HEK293T (cell line): ENCODE measurements at regions of chr6 and their contacts with region 1.

Region 1: GRCh38 chr6:36340618-36341454 is 4.1 kb upstream of the BNIP5 start:
- DNase-seq: peak; percentile 86

Region 2: DNA sequence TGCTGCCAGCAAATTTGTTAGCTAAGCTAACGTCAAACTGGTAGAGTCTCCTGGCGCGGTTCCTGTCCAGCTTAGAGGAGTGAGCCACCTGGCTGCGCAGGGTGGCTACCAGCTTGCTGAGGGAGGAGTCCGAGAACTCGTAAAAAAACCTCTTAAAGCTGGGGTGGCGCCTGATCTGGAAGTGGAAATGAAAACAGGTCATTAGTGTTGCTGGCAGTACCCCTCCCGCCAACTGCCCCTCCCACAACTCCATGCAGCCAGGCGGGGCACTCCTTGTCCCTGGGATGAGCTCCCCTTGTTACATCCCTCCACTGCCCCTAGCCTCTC is 21.4 kb before region 1 on chr6:
- CTCF ChIA-PET with region 1: interaction called, 17 read pairs
- POLR2A ChIA-PET with region 1: no interaction called
- DNase-seq: no peak

Region 3: DNA sequence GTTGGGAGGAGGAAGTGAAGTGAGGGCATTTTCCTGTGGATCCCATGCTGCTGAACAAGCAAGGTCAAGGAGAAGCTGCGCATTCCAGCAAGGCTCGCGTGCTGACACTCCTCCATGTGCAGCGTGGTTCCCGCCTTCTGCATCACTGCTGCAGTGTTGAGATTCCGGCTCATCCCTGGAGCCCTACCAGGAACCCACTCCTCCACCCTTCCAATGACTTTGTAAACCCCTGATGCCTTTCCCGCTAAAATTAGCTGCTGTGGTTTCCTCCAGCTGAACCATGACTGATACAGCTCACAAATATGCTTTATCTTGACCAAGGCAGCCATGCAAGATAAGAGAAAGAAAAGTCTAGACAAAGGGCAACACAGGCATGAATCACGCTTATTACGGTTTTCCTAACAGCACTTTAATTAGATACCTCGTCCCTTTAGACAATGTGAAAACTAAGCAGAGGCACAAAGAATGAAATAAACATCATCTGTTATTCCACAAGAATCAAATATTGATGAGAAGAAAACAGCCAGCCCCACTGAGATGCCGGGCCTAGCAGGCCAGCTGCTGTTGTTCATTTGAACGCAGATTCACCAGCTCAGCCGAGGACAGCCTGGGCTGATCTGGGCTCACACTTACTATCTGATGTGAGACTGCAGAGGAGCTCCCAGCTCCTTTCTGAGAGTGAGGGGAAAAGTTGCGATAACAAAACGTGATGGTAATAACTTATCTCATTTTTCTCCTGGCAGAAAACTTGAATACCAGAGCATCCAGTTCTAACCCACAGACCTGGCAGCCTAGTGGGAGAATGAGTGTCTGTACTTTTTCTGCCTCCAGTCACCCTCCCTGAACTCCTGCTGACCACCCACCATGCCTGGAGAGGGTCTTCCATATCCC is 10.1 kb after region 1 on chr6:
- CTCF ChIA-PET with region 1: interaction called, 19 read pairs
- POLR2A ChIA-PET with region 1: interaction called, 3 read pairs
- DNase-seq: no peak